Mucosa of descending colon (tissue), 3 donors: ENCODE measurements at regions of chr13 and their contacts with region 1.

Region 1: DNA sequence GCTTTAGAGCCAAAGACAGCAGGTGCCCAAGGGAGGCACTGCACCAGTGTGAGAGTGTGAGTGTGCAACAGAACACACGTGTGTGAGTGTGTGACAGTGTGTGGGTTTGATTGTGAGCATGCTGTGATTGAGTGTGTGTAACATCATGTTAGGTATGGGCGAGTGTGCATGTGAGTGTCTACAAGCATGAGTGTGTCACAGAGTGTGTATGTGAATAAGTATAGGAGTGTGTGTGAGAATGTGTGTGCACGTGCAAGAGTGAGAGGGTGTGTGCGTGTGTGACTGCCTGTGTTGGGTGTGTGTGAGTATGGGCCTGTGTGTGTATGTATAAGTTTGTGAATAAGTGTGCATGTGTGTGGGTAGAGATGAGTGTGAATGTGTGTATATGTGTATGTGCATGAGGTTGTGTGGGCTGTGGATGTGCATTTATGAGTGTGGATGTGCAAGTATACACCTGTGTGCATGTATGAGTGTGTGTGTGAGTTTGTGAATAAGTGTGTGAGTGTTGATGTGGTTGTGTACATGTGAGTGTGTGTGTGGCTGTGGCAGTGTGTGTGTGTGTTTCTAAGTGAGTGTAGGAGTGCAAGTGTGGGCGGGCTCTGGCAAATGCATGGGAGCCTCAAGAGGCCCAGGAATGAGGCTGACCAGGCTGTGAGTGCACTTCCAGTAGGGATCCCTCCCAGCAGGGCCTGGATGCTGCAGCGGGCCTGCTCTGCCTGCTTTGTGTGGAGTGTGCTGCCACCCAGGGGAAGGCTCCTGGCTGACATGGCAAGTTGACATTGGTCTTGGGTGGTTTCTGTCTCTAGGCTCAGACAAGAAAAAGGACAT is 198.4 kb downstream of the COL4A1 start:
- DNase-seq: peak in 2 of 3 donors; percentile 47 to 67
- ATAC-seq: peak; percentile 76
- H3K4me3 ChIP-seq: no peak overlapping the region
- H3K4me1 ChIP-seq: no peaks in the 10 kb centered on the region
- CTCF ChIP-seq: no peak

Region 2: GRCh38 chr13:109786457-109787134 is 322.0 kb before region 1 on chr13 and contains the start of gene IRS2:
- intact Hi-C with region 1: loop called in 1 of 2 experiments (anchors 10 kb)
- DNase-seq: peak; percentile 92 to 95 (median 94)
- ATAC-seq: peak; percentile 85
- H3K4me3 ChIP-seq: peak within 1 kb of the TSS; percentile 65
- H3K4me1 ChIP-seq: peaks cover 14% of the 10 kb centered on the region
- CTCF ChIP-seq: no peak
- total RNA-seq, gene IRS2: 14.0 to 31.4 (median 23.7) TPM